Panc1 (cell line): ENCODE measurements at regions of chr11 and their contacts with region 1.

Region 1: DNA sequence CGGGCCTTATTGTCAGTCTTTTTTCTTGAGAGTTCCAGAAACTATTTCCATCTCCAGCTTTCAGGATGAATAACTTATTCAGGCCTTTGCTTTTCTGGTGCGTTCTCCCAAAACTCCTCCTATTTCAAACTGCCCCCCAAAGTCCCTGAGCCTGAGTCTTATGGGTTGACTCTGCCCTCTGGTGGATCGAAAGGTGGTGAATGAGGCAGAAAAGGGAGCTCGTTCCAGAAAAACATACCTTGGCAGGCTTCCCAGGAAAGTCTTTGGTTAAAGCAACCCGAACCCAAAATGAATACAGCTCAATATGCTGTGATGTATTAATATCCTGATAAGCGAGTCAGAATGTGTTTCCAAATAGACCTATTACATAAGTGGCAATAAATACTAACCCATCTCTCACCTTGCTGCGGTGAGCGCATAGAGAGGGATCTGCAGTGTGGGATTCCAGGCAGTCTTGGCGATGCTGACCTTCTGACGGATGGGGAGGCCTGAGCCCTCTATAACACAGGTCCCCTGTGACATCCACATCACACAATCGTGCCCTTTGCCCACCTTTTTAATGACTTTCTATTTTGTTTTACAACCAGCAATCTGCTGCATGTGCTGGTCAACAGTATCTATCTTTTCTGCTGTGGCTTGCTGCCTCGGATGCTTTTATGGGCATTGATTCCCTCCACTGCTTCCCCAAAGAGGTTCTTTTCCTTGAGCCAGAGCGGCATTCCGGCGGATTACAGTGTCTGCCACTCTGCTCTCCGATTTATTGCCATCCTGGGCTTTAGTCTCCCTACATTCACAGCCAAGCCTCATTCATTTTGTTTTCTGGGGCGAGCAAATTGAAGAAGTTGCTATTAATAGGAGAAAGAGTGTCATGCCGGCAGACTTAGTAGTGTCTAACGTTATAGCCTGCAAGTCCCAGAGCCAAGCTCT is 756.8 kb downstream of the NTM start:
- DNase-seq: peak; percentile 2
- ATAC-seq: no peak
- H3K4me3 ChIP-seq: peak overlapping the region in 1 of 2 experiments; percentile 25; a peak in 2 of 4 replicates
- H3K27ac ChIP-seq: no peak overlapping the region
- H3K4me1 ChIP-seq: no peaks in the 10 kb centered on the region
- H3K27me3 ChIP-seq: no peaks in the 10 kb centered on the region
- CTCF ChIP-seq: peak; percentile 65

Region 2: GRCh38 chr11:131867457-131868257 is 259.6 kb before region 1 on chr11:
- CTCF ChIA-PET with region 1: interaction called, 4 read pairs
- POLR2A ChIA-PET with region 1: no interaction called
- in situ Hi-C with region 1: no loop called
- intact Hi-C with region 1: loop called (anchors 10 kb)
- DNase-seq: peak; percentile 51
- ATAC-seq: peak; percentile 84
- H3K4me3 ChIP-seq: no peak overlapping the region
- H3K27ac ChIP-seq: no peak overlapping the region
- H3K4me1 ChIP-seq: no peaks in the 10 kb centered on the region
- H3K27me3 ChIP-seq: no peaks in the 10 kb centered on the region
- CTCF ChIP-seq: peak; percentile 80

Region 3: GRCh38 chr11:131924457-131925201 is 202.6 kb before region 1 on chr11:
- CTCF ChIA-PET with region 1: no interaction called
- POLR2A ChIA-PET with region 1: no interaction called
- in situ Hi-C with region 1: no loop called
- intact Hi-C with region 1: no loop called
- DNase-seq: no peak
- ATAC-seq: no peak
- H3K4me3 ChIP-seq: no peak overlapping the region
- H3K27ac ChIP-seq: no peak overlapping the region
- H3K4me1 ChIP-seq: no peaks in the 10 kb centered on the region
- H3K27me3 ChIP-seq: no peaks in the 10 kb centered on the region
- CTCF ChIP-seq: no peak

Region 4: GRCh38 chr11:132140056-132140455 is 12.8 kb after region 1 on chr11:
- CTCF ChIA-PET with region 1: no interaction called
- POLR2A ChIA-PET with region 1: no interaction called
- in situ Hi-C with region 1: no loop called
- intact Hi-C with region 1: no loop called
- DNase-seq: no peak
- ATAC-seq: 0 out of 2 replicates have a peak, but pooled peaks have one; percentile 58
- H3K4me3 ChIP-seq: no peak overlapping the region
- H3K27ac ChIP-seq: no peak overlapping the region
- H3K4me1 ChIP-seq: no peaks in the 10 kb centered on the region
- H3K27me3 ChIP-seq: no peaks in the 10 kb centered on the region
- CTCF ChIP-seq: peak; percentile 42

Region 5: DNA sequence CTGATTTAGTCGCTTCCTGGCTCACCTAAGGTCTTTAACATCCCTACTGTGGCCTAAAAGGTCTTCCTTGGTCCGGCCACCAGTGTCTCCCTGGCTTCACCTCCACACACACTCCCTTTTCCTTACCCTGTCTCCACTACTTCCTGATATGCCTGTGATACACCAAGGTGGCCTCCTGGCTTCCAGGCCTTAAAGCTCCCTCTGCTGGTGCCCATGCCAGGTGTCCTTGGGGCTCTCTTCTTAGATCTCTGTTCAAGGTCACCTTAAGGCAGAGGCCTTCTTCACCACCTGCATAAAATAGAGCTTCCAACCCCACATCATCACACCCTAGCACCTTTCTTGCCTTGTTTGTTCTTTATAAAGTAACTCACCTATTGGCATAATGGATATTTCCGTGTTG is 30.9 kb after region 1 on chr11:
- CTCF ChIA-PET with region 1: no interaction called
- POLR2A ChIA-PET with region 1: no interaction called
- in situ Hi-C with region 1: no loop called
- intact Hi-C with region 1: no loop called
- DNase-seq: peak; percentile 22
- ATAC-seq: peak; percentile 82
- H3K4me3 ChIP-seq: no peak overlapping the region
- H3K27ac ChIP-seq: no peak overlapping the region
- H3K4me1 ChIP-seq: no peaks in the 10 kb centered on the region
- H3K27me3 ChIP-seq: no peaks in the 10 kb centered on the region
- CTCF ChIP-seq: peak; percentile 72

Region 6: GRCh38 chr11:132886335-132886734 is 759.1 kb after region 1 on chr11:
- CTCF ChIA-PET with region 1: no interaction called
- POLR2A ChIA-PET with region 1: no interaction called
- in situ Hi-C with region 1: no loop called
- intact Hi-C with region 1: no loop called
- DNase-seq: no peak
- ATAC-seq: no peak
- H3K4me3 ChIP-seq: no peak overlapping the region
- H3K27ac ChIP-seq: no peak overlapping the region
- H3K4me1 ChIP-seq: no peaks in the 10 kb centered on the region
- H3K27me3 ChIP-seq: no peaks in the 10 kb centered on the region
- CTCF ChIP-seq: no peak